CD4-positive, alpha-beta T cell (primary cell): ENCODE measurements at regions of chr11 and their contacts with region 1.

Region 1: DNA sequence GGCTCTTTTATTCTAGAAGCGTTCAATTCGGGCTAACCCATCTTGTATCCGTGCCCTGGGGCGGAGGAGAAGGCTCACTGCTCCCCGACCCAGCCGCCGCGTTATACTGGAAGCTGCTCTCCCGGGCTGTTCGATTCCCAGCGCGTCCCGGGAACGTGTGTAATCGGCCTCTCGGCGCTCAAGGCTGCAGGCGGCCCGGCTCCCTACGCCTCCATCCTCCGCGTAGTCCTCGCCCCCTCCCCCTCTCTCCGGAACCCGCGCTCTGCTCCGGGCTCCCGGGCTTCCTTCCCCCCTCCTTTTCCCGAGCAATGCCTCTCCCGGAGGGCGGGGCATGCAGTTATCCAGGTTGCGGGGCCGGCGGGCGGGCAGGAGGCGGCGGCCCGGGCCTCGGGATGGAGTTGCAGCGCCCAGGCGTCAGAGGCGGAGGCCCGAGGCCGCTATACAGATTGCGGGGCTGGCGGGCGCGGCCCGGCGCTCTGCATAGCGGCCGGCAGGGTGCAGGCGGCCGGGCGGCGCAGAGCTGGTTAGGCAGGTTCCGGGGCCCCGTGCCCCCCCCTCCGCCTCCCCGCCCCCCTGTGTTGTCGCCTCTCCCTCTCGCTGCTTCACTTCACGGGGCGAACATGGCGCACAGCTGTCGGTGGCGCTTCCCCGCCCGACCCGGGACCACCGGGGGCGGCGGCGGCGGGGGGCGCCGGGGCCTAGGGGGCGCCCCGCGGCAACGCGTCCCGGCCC is at the start of gene KMT2A:
- DNase-seq: peak; percentile 88 to 97 (median 93)
- ATAC-seq: peak; percentile 54
- H3K4me3 ChIP-seq: peak within 1 kb of the TSS; percentile 94
- H3K4me3 Mint-ChIP-seq: peak within 1 kb of the TSS; percentile 99
- H3K27ac ChIP-seq: peak within 1 kb of the TSS; percentile 91 to 98
- H3K27ac Mint-ChIP-seq: peak within 1 kb of the TSS; percentile 98
- H3K4me1 ChIP-seq: peaks cover 26% of the 10 kb centered on the region
- H3K4me1 Mint-ChIP-seq: peaks cover 50% of the 10 kb centered on the region
- H3K27me3 ChIP-seq: no peaks in the 10 kb centered on the region
- H3K27me3 Mint-ChIP-seq: no peaks in the 10 kb centered on the region
- CTCF ChIP-seq: no peak
- total RNA-seq, gene KMT2A: 135 to 140 TPM

Region 2: GRCh38 chr11:118304568-118305248 is 131.4 kb before region 1 on chr11 and contains the start of gene CD3E:
- CTCF ChIA-PET with region 1: no interaction called
- POLR2A ChIA-PET with region 1: interaction called, 14 read pairs
- intact Hi-C with region 1: loop called (anchors 1 to 5 kb)
- DNase-seq: peak; percentile 51 to 84 (median 64)
- ATAC-seq: peak; percentile 73
- H3K4me3 ChIP-seq: peak within 1 kb of the TSS; percentile 68
- H3K4me3 Mint-ChIP-seq: peak within 1 kb of the TSS; percentile 96
- H3K27ac ChIP-seq: peak within 1 kb of the TSS; percentile 81 to 88
- H3K27ac Mint-ChIP-seq: peak within 1 kb of the TSS; percentile 100
- H3K4me1 ChIP-seq: peaks cover 64% of the 10 kb centered on the region
- H3K4me1 Mint-ChIP-seq: peaks cover 87% of the 10 kb centered on the region
- H3K27me3 ChIP-seq: no peaks in the 10 kb centered on the region
- H3K27me3 Mint-ChIP-seq: no peaks in the 10 kb centered on the region
- CTCF ChIP-seq: no peak
- total RNA-seq, gene CD3E: 483 to 515 TPM

Region 3: DNA sequence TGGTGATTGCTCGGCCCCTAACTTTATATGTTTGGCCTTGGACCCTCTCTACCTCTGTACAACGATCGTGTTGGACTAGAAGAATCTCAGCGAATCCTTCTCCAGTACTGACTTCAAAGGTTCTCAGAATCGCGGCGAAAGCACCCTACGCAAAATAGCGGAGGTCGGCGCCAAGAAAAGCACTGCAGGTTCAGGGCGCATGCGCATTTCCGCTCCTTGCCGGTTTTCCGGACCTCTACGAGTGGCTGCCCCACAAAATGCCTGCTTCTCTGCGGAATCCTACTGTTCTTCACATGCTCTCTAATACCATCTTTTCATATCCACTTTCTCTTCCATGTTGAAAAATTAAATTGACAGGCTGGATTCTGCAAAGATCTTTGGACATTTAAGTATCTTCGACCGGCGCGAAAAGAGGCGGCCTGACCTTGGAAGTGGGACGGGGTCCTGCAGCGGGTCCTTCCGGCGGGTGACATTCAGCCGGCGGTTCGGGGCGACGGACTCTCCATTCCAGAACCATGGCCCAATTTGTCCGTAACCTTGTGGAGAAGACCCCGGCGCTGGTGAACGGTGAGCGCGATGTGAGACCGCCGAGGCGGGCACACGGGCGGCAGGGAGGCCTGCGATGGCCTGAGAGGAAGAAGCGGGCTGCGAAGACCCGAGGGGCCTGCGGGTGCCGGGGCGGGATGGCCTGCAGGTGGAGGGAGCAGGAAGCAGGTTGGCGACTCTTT is 34.7 kb before region 1 on chr11 and contains the start of gene ATP5MG:
- CTCF ChIA-PET with region 1: interaction called, 7 read pairs
- POLR2A ChIA-PET with region 1: interaction called, 75 read pairs
- intact Hi-C with region 1: loop called (anchors 1 kb)
- DNase-seq: peak; percentile 87 to 98 (median 92)
- ATAC-seq: peak; percentile 58
- H3K4me3 ChIP-seq: peak within 1 kb of the TSS; percentile 97
- H3K4me3 Mint-ChIP-seq: peak within 1 kb of the TSS; percentile 93
- H3K27ac ChIP-seq: peak within 1 kb of the TSS; percentile 90 to 93
- H3K27ac Mint-ChIP-seq: peak within 1 kb of the TSS; percentile 96
- H3K4me1 ChIP-seq: peaks cover 46% of the 10 kb centered on the region
- H3K4me1 Mint-ChIP-seq: peaks cover 77% of the 10 kb centered on the region
- H3K27me3 ChIP-seq: no peaks in the 10 kb centered on the region
- H3K27me3 Mint-ChIP-seq: no peaks in the 10 kb centered on the region
- CTCF ChIP-seq: no peak
- total RNA-seq, gene ATP5MG: 147 to 153 TPM

Region 4: DNA sequence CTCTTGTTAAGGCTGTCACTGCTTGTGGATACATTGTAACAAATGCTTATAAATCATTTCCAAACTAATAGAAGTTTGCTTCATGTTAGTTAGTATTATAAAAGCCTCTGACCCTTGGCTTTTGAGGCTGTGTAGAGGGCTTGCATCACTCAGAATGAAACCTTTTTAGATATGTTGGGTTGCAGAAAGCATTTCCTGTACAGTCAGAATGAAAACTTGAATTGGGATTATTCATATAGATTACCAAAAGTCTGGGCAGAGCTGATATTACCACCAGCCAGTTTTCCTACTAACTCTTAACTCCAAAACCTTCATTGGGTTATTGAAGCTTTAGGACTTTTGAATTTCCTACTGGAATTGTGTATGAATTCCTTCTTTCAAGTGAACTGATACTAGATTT is 12.2 kb after region 1 on chr11:
- CTCF ChIA-PET with region 1: interaction called, 3 read pairs
- POLR2A ChIA-PET with region 1: interaction called, 14 read pairs
- intact Hi-C with region 1: no loop called
- DNase-seq: no peak
- ATAC-seq: no peak
- H3K4me3 ChIP-seq: no peak overlapping the region
- H3K4me3 Mint-ChIP-seq: no peak overlapping the region
- H3K27ac ChIP-seq: no peak overlapping the region
- H3K27ac Mint-ChIP-seq: no peak overlapping the region
- H3K4me1 ChIP-seq: peaks cover 21% of the 10 kb centered on the region
- H3K4me1 Mint-ChIP-seq: peaks cover 75% of the 10 kb centered on the region
- H3K27me3 ChIP-seq: no peaks in the 10 kb centered on the region
- H3K27me3 Mint-ChIP-seq: no peaks in the 10 kb centered on the region
- CTCF ChIP-seq: no peak

Region 5: DNA sequence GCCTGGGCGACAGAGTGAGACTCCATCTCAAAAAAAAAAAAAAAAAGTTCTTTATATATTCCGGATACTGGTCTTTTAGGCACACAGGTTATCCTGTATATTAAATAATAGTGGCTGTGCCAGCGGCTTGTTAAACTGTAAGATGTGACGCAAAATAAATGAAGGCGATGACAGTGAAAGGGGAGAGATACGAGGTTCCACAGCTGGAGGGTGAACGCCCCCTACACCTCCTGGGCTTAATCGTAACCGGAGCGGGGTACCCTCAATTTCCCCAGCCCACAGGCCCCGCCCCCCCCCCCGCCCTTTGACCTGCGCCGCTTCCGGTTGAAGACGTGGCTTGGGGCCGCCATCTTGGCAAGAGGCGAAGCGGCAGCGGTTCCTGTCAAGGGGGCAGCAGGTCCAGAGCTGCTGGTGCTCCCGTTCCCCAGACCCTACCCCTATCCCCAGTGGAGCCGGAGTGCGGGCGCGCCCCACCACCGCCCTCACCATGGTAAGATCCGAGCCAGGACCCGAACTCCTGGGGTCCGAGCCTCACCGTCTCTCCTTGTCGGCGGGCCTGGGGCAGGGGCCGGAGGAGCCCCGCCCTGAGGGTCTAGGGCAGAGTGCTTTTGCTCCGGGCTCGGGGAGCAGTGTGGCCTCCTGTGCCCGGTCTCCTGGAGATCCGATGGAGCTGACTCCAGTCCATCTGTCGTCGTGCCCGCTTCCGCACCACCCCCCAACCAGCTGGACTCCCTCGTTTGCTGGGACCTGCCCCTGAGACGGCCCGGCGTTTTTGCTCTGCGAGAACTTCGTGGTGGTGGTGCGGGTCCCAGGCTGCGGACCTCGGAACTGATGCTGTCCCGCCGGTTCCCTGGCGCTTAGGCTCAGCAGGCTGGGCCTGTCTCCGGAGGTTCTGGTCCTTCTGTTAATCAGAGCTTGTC is 136.3 kb after region 1 on chr11 and contains the start of gene ARCN1:
- CTCF ChIA-PET with region 1: no interaction called
- POLR2A ChIA-PET with region 1: interaction called, 10 read pairs
- intact Hi-C with region 1: no loop called
- DNase-seq: peak; percentile 64 to 91 (median 75)
- ATAC-seq: peak; percentile 81
- H3K4me3 ChIP-seq: peak within 1 kb of the TSS; percentile 88
- H3K4me3 Mint-ChIP-seq: peak within 1 kb of the TSS; percentile 99
- H3K27ac ChIP-seq: peak within 1 kb of the TSS; percentile 97 to 98
- H3K27ac Mint-ChIP-seq: peak within 1 kb of the TSS; percentile 94
- H3K4me1 ChIP-seq: peaks cover 20% of the 10 kb centered on the region
- H3K4me1 Mint-ChIP-seq: peaks cover 52% of the 10 kb centered on the region
- H3K27me3 ChIP-seq: no peaks in the 10 kb centered on the region
- H3K27me3 Mint-ChIP-seq: no peaks in the 10 kb centered on the region
- CTCF ChIP-seq: no peak
- total RNA-seq, gene ARCN1: 73.7 to 78.6 TPM

Region 6: GRCh38 chr11:118883368-118884071 is 447.5 kb after region 1 on chr11 and contains the start of gene CXCR5:
- CTCF ChIA-PET with region 1: no interaction called
- POLR2A ChIA-PET with region 1: no interaction called
- intact Hi-C with region 1: no loop called
- DNase-seq: peak in 10 of 14 experiments; percentile 35 to 84 (median 54)
- ATAC-seq: peak; percentile 72
- H3K4me3 ChIP-seq: peak within 1 kb of the TSS; percentile 56
- H3K4me3 Mint-ChIP-seq: peak within 1 kb of the TSS; percentile 78
- H3K27ac ChIP-seq: peak within 1 kb of the TSS; percentile 39 to 52
- H3K27ac Mint-ChIP-seq: peak within 1 kb of the TSS; percentile 97
- H3K4me1 ChIP-seq: peaks cover 84% of the 10 kb centered on the region
- H3K4me1 Mint-ChIP-seq: peaks cover 79% of the 10 kb centered on the region
- H3K27me3 ChIP-seq: no peaks in the 10 kb centered on the region
- H3K27me3 Mint-ChIP-seq: no peaks in the 10 kb centered on the region
- CTCF ChIP-seq: no peak
- total RNA-seq, gene CXCR5: 13.2 to 14.3 TPM